Activated CD8-positive, alpha-beta T cell treated with anti-CD3 and anti-CD28 coated beads, Interleukin-2, amount 10 ng/mL, durations not matched to agents 7 days and 5 days (primary cell): ENCODE measurements at regions of chr20 and their contacts with region 1.

Region 1: GRCh38 chr20:44115762-44116644 is 71.0 kb downstream of the JPH2 start:
- DNase-seq: no peak
- ATAC-seq: no peak
- H3K4me3 Mint-ChIP-seq: no peak overlapping the region
- H3K27ac Mint-ChIP-seq: no peak overlapping the region
- H3K4me1 Mint-ChIP-seq: peaks cover 17% of the 10 kb centered on the region
- H3K27me3 Mint-ChIP-seq: peaks cover 22% of the 10 kb centered on the region

Region 2: DNA sequence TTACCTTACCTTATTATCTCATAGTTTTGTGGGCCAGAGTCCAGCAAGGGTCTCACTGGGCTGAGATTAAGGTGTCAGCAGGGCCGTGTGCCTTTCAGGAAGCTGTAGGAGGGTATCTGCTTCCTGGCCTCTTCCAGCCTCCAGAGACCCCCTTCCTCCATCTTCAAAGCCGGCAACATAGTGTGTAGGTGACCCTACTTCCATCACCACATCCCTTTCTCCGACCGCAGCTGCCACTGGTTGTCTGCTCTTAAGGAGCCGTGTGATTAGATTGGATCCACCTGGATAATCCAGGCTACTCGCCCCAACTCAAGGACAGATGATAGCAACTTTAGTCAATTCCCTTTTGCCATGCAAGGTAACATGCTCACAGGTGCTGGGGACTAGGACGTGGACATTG is 20.2 kb before region 1 on chr20:
- CTCF ChIA-PET with region 1: interaction called, 13 read pairs
- POLR2A ChIA-PET with region 1: no interaction called
- DNase-seq: no peak
- ATAC-seq: no peak
- H3K4me3 Mint-ChIP-seq: no peak overlapping the region
- H3K27ac Mint-ChIP-seq: no peak overlapping the region
- H3K4me1 Mint-ChIP-seq: peaks cover 8% of the 10 kb centered on the region
- H3K27me3 Mint-ChIP-seq: peaks cover 23% of the 10 kb centered on the region

Region 3: DNA sequence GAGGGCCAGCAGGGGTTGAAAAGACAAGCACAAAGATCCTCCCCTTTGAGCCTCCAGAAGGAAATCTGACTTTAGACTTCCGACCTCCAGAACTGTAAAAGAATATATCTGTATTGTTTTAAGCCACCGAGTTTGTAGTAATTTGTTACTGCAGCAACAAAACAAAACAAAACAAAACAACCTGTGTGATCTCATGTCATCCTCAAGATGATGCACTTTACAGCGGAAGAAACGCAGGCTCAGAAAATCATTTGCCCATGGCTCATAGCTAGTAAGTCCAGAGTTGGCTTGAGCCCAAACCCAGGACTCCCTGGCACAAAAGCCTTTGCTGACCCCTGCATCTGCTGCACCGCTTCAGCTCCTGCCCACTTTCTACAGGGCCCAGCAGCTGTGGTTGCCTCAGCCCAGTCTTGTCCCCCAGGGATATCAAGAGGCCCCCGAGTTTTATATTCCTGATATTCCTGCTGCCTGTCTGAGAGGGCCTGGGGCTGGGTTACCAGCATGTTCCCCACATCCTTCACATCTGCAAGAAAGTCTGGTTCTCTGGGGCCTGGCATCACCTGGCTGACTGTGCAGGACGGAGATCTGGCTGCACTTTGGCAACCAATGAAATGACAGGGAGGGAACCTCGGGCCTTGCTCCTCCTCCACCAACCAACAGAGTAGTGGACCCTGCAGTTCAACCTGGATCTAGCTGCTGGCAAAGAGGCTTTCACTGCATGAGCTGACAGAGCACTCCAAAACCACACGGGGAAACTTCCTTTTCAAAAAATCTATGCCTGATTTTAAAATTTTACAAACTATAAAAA is 14.1 kb after region 1 on chr20:
- CTCF ChIA-PET with region 1: interaction called, 15 read pairs
- POLR2A ChIA-PET with region 1: interaction called, 3 read pairs
- DNase-seq: no peak
- ATAC-seq: no peak
- H3K4me3 Mint-ChIP-seq: no peak overlapping the region
- H3K27ac Mint-ChIP-seq: no peak overlapping the region
- H3K4me1 Mint-ChIP-seq: no peaks in the 10 kb centered on the region
- H3K27me3 Mint-ChIP-seq: peaks cover 6% of the 10 kb centered on the region

Region 4: GRCh38 chr20:44187051-44187762 is 71.2 kb after region 1 on chr20 and contains the start of gene JPH2:
- CTCF ChIA-PET with region 1: interaction called, 157 read pairs
- POLR2A ChIA-PET with region 1: interaction called, 3 read pairs
- DNase-seq: no peak
- ATAC-seq: no peak
- H3K4me3 Mint-ChIP-seq: peak within 1 kb of the TSS; percentile 48
- H3K27ac Mint-ChIP-seq: no peak within 1 kb of the TSS
- H3K4me1 Mint-ChIP-seq: peaks cover 17% of the 10 kb centered on the region
- H3K27me3 Mint-ChIP-seq: peaks cover 50% of the 10 kb centered on the region
- total RNA-seq, gene JPH2: 0.10 TPM in 1 of 2 experiments, not detected in the other

Region 5: GRCh38 chr20:44196271-44196670 is 80.3 kb after region 1 on chr20:
- CTCF ChIA-PET with region 1: interaction called, 157 read pairs
- POLR2A ChIA-PET with region 1: no interaction called
- DNase-seq: no peak
- ATAC-seq: no peak
- H3K4me3 Mint-ChIP-seq: no peak overlapping the region
- H3K27ac Mint-ChIP-seq: no peak overlapping the region
- H3K4me1 Mint-ChIP-seq: peaks cover 44% of the 10 kb centered on the region
- H3K27me3 Mint-ChIP-seq: peaks cover 12% of the 10 kb centered on the region

Region 6: DNA sequence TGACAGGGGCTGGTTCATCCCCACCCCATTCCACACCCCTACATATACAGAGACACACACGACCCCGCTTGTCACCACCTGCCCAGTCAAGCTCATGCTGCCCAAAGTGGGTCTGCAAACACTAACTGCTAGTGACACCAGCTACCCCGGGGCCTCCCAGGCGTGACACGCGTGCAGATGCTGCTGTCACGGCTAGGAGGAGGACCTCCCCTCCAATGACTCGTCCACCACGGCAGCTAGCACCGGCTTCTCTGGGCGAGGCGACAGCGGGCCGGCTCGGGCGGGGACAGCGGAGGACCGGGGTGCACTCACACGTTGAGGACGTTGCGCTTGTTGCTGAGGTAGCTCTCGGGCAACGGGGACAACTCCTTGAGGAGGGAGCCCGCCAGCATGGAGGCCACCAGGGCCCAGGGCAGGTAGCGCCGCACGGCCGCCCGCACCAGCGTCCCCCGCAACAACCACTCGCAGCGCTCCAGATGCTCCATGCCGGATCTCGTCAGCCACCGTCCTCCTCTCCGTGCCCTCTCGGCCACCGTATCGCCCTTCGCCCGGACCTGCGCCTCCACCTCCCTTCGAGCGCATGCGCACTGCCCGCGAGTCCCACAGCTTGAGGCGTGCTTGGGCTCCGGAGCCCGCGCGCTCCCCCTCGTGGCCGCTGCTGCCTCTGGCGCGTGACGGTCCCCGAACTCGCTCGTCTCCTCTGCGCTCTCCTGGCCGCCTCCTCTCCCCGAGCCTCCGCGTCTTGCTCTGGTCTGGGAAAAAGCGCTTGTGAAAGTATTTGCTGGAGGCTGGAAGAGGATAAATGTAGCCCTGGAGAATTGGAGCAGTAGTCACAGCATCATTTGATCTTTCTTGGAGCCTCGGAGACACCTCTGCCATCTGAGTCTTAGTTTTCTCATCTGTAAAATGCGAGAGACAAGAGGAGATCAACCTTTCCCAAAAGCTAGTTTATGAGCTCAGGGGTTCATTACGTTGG is 194.9 kb after region 1 on chr20 and contains the start of gene FITM2:
- CTCF ChIA-PET with region 1: interaction called, 18 read pairs
- POLR2A ChIA-PET with region 1: no interaction called
- DNase-seq: peak; percentile 99
- ATAC-seq: peak; percentile 92
- H3K4me3 Mint-ChIP-seq: peak within 1 kb of the TSS; percentile 88
- H3K27ac Mint-ChIP-seq: peak within 1 kb of the TSS; percentile 90
- H3K4me1 Mint-ChIP-seq: peaks cover 19% of the 10 kb centered on the region
- H3K27me3 Mint-ChIP-seq: peaks cover 6% of the 10 kb centered on the region
- total RNA-seq, gene FITM2: 2.7 to 2.9 TPM